ENCODE measurements at regions of chr18 and their contacts with region 1.

Region 1: GRCh38 chr18:23812546-23813440 is 123.5 kb downstream of the LAMA3 start:
- DNase-seq: peak; percentile 36
- H3K4me3 ChIP-seq: no peak overlapping the region
- H3K27ac ChIP-seq: no peak overlapping the region
- H3K4me1 ChIP-seq: no peaks in the 10 kb centered on the region
- H3K27me3 ChIP-seq: no peaks in the 10 kb centered on the region
- CTCF ChIP-seq: peak; percentile 42 to 56

Region 2: GRCh38 chr18:23433360-23433759 is 379.4 kb before region 1 on chr18:
- CTCF ChIA-PET with region 1: no interaction called
- dilution Hi-C with region 1: no loop called
- in situ Hi-C with region 1: no loop called
- intact Hi-C with region 1: no loop called
- DNase-seq: no peak
- H3K4me3 ChIP-seq: no peak overlapping the region
- H3K27ac ChIP-seq: no peak overlapping the region
- H3K4me1 ChIP-seq: peaks cover 3% of the 10 kb centered on the region
- H3K27me3 ChIP-seq: no peaks in the 10 kb centered on the region
- CTCF ChIP-seq: no peak

Region 3: DNA sequence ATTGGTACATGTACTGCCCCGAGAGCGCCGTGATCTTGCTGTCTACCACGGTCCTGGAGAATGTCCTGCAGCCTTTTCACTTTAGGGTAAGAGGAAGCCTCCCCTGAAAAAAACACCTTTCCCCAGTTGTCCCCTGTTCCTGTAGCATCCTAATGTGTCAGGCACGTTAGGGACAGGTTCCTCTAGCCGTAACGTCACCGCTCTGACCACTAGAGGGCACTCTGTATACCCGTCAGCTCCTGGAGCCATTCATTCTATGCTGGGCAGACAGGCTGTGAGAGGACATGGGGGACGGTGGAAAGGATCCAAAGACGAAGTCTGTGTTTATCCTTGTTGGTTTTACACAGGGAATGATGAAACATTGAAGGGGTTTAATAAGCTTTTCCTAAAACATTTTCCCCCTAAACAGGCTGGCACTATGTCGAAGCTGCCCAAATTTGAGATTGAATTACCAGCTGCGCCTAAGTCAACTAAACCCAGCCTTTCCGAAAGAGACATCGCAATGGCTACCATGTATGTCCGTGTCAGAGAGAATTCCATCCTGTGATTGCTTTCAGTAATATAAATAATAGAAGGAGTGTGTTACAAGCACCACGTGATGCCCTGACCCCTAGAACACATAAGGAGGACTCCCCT is 296.8 kb before region 1 on chr18:
- CTCF ChIA-PET with region 1: no interaction called
- dilution Hi-C with region 1: no loop called
- in situ Hi-C with region 1: no loop called
- intact Hi-C with region 1: loop called (anchors 5 kb)
- DNase-seq: peak; percentile 62
- H3K4me3 ChIP-seq: no peak overlapping the region
- H3K27ac ChIP-seq: no peak overlapping the region
- H3K4me1 ChIP-seq: peaks cover 15% of the 10 kb centered on the region
- H3K27me3 ChIP-seq: no peaks in the 10 kb centered on the region
- CTCF ChIP-seq: peak; percentile 90 to 97

Region 4: GRCh38 chr18:23629444-23629946 is 183.3 kb before region 1 on chr18:
- CTCF ChIA-PET with region 1: no interaction called
- dilution Hi-C with region 1: no loop called
- in situ Hi-C with region 1: loop called (anchors 10 kb)
- intact Hi-C with region 1: no loop called
- DNase-seq: no peak
- H3K4me3 ChIP-seq: no peak overlapping the region
- H3K27ac ChIP-seq: no peak overlapping the region
- H3K4me1 ChIP-seq: peaks cover 29% of the 10 kb centered on the region
- H3K27me3 ChIP-seq: no peaks in the 10 kb centered on the region
- CTCF ChIP-seq: no peak

Region 5: GRCh38 chr18:23719634-23720201 is 93.1 kb before region 1 on chr18:
- CTCF ChIA-PET with region 1: no interaction called
- dilution Hi-C with region 1: no loop called
- in situ Hi-C with region 1: loop called in 1 of 2 experiments (anchors 10 kb)
- intact Hi-C with region 1: loop called (anchors 5 kb)
- DNase-seq: peak; percentile 97
- H3K4me3 ChIP-seq: no peak overlapping the region
- H3K27ac ChIP-seq: peak overlapping the region; percentile 85
- H3K4me1 ChIP-seq: peaks cover 44% of the 10 kb centered on the region
- H3K27me3 ChIP-seq: no peaks in the 10 kb centered on the region
- CTCF ChIP-seq: no peak

Region 6: GRCh38 chr18:23982155-23983079 is 169.6 kb after region 1 on chr18:
- CTCF ChIA-PET with region 1: no interaction called
- dilution Hi-C with region 1: no loop called
- in situ Hi-C with region 1: no loop called
- intact Hi-C with region 1: no loop called
- DNase-seq: no peak
- H3K4me3 ChIP-seq: no peak overlapping the region
- H3K27ac ChIP-seq: no peak overlapping the region
- H3K4me1 ChIP-seq: no peaks in the 10 kb centered on the region
- H3K27me3 ChIP-seq: no peaks in the 10 kb centered on the region
- CTCF ChIP-seq: no peak

Region 7: DNA sequence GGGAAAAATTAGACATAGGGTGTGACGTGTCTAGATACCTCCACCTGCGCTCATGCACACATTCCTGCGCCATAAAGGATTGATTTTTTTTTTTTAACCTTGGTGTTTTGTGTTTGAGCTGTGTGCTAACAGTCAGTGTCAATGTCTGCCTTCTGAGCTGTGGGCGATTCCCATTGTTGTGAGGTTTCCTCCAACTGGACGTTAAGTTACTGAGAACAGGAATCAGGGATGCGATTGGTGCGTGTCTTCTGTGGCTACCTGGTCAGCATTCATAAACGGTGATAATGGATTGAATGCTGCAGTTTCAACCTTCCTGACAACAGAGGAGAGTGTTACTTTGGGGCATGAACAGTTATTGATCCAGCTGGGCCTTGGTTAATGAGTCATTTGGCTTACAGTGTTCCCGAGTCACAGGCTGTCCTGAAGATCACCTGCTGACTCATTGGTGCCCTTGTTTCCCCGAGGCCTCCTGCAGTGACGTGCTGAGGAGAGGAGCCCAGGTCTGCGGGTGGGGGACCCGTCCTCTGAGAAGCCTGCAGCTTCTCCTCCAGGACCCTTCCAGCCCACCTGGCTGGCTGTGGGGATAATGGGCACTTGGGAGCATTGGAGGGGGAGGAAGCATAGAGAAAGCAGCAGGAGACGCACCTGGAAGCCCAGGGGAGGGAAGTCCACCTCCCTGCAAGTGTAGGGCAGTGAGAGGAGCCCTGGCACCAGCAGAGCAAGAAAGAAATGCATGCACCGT is 300.3 kb after region 1 on chr18:
- CTCF ChIA-PET with region 1: no interaction called
- dilution Hi-C with region 1: no loop called
- in situ Hi-C with region 1: no loop called
- intact Hi-C with region 1: no loop called
- DNase-seq: peak; percentile 84
- H3K4me3 ChIP-seq: no peak overlapping the region
- H3K27ac ChIP-seq: no peak overlapping the region
- H3K4me1 ChIP-seq: peaks cover 16% of the 10 kb centered on the region
- H3K27me3 ChIP-seq: no peaks in the 10 kb centered on the region
- CTCF ChIP-seq: no peak

Measured in mammary epithelial cell (primary cell).